Dorsolateral prefrontal cortex (tissue), 120 donors: ENCODE measurements at regions of chr14 and their contacts with region 1.

Region 1: GRCh38 chr14:74612350-74613021 is 449 bp upstream of the LTBP2 start:
- DNase-seq: peak in 9 of 10 donors; percentile 32 to 76 (median 45)
- H3K4me3 ChIP-seq: peak overlapping the region; percentile 34 to 75 (median 58)
- H3K27ac ChIP-seq: peak overlapping the region in 2 of 59 donors; percentile 10 to 37
- H3K27me3 ChIP-seq: peaks cover 0 to 64% (median 31%) of the 10 kb centered on the region in 45 donors
- CTCF ChIP-seq: peak in 55 of 56 donors; percentile 10 to 76 (median 56)

Region 2: GRCh38 chr14:74217672-74218448 is 394.6 kb before region 1 on chr14:
- intact Hi-C with region 1: no loop called
- DNase-seq: peak; percentile 45 to 83 (median 60)
- H3K4me3 ChIP-seq: peak overlapping the region in 47 of 59 donors; percentile 5 to 55 (median 35)
- H3K27ac ChIP-seq: no peak overlapping the region
- H3K27me3 ChIP-seq: peaks cover 0 to 39% (median 8%) of the 10 kb centered on the region in 45 donors
- CTCF ChIP-seq: peak; percentile 42 to 88 (median 80)

Region 3: GRCh38 chr14:74362361-74362915 is 250.0 kb before region 1 on chr14:
- intact Hi-C with region 1: loop called in 1 of 2 experiments (anchors 5 kb)
- DNase-seq: peak; percentile 62 to 84 (median 77)
- H3K4me3 ChIP-seq: no peak overlapping the region
- H3K27ac ChIP-seq: no peak overlapping the region
- H3K27me3 ChIP-seq: peaks cover 0 to 5% (median 0%) of the 10 kb centered on the region in 45 donors
- CTCF ChIP-seq: peak; percentile 85 to 99 (median 94)

Region 4: DNA sequence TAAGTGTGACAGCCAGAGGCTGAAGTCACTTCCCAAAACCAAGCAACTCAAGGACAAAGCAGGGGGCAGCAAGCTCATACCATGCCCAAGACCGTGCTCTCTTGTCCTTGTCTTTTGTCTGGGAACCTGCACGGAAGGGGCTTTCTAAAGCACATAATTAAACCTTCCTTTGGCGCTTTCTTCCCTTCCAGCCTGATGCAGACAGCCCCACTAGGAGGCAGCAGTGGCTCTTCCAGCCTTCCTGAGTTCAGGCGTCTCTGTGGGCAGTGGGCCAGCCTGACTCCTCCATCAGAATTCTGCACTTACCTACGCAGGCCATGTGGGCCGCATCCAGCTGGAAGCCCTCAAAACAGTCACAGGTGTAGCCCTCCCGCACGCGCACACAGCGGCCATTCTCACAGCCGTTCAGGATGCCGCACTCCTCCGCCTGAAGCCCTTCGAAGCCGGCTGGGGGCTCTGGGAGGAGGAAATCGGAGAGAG is 111.3 kb before region 1 on chr14:
- intact Hi-C with region 1: loop called in 1 of 2 experiments (anchors 5 kb)
- DNase-seq: peak; percentile 53 to 82 (median 74)
- H3K4me3 ChIP-seq: peak overlapping the region in 39 of 59 donors; percentile 0 to 58 (median 30)
- H3K27ac ChIP-seq: peak overlapping the region in 3 of 59 donors; percentile 12 to 48 (median 18)
- H3K27me3 ChIP-seq: no peaks in the 10 kb centered on the region
- CTCF ChIP-seq: peak; percentile 25 to 77 (median 62)

Region 5: GRCh38 chr14:74793506-74794168 is 181.2 kb after region 1 on chr14:
- intact Hi-C with region 1: loop called in 1 of 2 experiments (anchors 10 kb)
- DNase-seq: no peak
- H3K4me3 ChIP-seq: no peak overlapping the region
- H3K27ac ChIP-seq: peak overlapping the region in 4 of 59 donors; percentile 9 to 35 (median 24)
- H3K27me3 ChIP-seq: no peaks in the 10 kb centered on the region
- CTCF ChIP-seq: peak in 29 of 56 donors; percentile 9 to 52 (median 26)

Region 6: DNA sequence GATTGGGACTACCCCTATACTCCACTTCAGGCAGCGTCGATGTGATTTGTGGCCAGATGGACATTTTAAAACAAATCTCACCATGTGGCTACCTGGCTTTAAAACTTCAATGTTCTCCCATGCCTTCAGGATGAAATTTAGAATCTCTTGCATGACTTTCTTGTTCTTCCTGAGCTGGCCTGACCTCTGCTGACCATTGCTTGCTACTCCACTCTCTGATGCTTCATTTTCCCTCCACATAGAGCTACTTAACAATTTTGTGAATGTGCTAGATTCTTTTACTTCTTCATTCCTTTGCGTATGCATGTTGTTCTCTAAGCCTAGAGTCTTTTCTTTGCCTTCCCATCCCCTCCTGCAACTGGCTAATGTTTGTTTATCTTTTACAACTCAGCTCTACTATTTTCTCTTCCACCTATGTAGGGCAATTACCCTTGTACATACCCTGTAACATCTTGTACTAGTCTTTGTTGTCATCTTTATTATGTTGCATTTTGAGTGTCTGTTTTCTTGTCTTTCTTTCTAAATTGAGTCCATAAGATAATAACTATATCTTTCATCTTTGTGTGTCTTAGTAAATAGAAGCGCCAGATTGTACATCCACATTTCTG is 191.8 kb after region 1 on chr14:
- intact Hi-C with region 1: loop called (anchors 5 to 10 kb)
- DNase-seq: no peak
- H3K4me3 ChIP-seq: no peak overlapping the region
- H3K27ac ChIP-seq: no peak overlapping the region
- H3K27me3 ChIP-seq: no peaks in the 10 kb centered on the region
- CTCF ChIP-seq: peak in 49 of 56 donors; percentile 2 to 67 (median 43)

Region 7: GRCh38 chr14:74843653-74844052 is 231.2 kb after region 1 on chr14:
- intact Hi-C with region 1: no loop called
- DNase-seq: no peak
- H3K4me3 ChIP-seq: no peak overlapping the region
- H3K27ac ChIP-seq: no peak overlapping the region
- H3K27me3 ChIP-seq: no peaks in the 10 kb centered on the region
- CTCF ChIP-seq: no peak